PC-3 (cell line): ENCODE measurements at regions of chr3 and their contacts with region 1.

Region 1: DNA sequence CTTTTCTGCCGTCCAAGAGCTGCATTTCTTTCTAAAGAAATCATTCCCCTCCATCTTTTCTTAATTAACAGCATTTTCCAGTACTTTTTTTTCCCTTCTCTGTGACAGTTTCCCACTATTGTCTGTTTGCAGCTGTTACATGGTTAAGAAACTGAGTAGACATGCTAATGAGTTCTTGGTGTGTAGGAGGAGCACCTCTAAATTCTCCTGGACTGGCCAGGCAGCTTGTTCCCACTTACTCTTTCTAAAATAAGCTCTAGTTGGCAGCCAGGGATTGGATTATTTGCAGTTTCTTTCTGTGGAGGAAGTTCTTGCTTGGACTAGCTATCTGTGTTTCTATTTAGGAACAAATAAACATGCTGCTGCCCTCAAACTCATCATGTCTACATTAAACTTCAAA is 235.1 kb upstream of the GAP43 start:
- DNase-seq: no peak
- ATAC-seq: no peak
- H3K4me3 ChIP-seq: no peak overlapping the region
- H3K27ac ChIP-seq: no peak overlapping the region
- H3K4me1 ChIP-seq: no peaks in the 10 kb centered on the region
- H3K27me3 ChIP-seq: 0 out of 2 replicates have a peak, but pooled peaks cover 8% of the 10 kb centered on the region
- CTCF ChIP-seq: no peak

Region 2: GRCh38 chr3:114848082-114848481 is 540.1 kb before region 1 on chr3:
- CTCF ChIA-PET with region 1: no interaction called
- POLR2A ChIA-PET with region 1: interaction called, 11 read pairs
- intact Hi-C with region 1: no loop called
- DNase-seq: no peak
- ATAC-seq: no peak
- H3K4me3 ChIP-seq: no peak overlapping the region
- H3K27ac ChIP-seq: no peak overlapping the region
- H3K4me1 ChIP-seq: no peaks in the 10 kb centered on the region
- H3K27me3 ChIP-seq: no peaks in the 10 kb centered on the region
- CTCF ChIP-seq: no peak

Region 3: GRCh38 chr3:115239717-115240116 is 148.4 kb before region 1 on chr3:
- CTCF ChIA-PET with region 1: no interaction called
- POLR2A ChIA-PET with region 1: no interaction called
- intact Hi-C with region 1: no loop called
- DNase-seq: peak; percentile 95
- ATAC-seq: peak; percentile 100
- H3K4me3 ChIP-seq: no peak overlapping the region
- H3K27ac ChIP-seq: peak overlapping the region; percentile 90
- H3K4me1 ChIP-seq: peaks cover 20% of the 10 kb centered on the region
- H3K27me3 ChIP-seq: no peaks in the 10 kb centered on the region
- CTCF ChIP-seq: no peak

Region 4: DNA sequence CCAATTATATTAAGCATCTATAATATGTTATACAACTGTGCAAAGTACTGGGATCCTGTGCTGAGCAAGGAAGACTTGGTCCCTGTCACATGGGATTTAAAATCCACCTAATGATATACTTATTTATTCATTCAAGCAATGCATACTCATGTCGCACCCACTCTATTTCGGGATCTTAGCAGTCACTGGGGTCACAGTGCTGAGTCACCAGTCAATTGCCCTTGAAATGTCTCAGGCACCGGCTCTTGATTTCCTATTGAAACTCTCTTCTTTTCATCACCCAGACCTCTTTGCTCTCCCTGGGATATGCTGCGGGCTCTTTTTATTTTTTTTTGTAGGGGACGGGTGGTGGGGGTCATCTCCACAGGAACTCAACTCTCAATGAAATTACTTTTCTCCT is 40.7 kb after region 1 on chr3:
- CTCF ChIA-PET with region 1: no interaction called
- POLR2A ChIA-PET with region 1: no interaction called
- intact Hi-C with region 1: no loop called
- DNase-seq: no peak
- ATAC-seq: no peak
- H3K4me3 ChIP-seq: no peak overlapping the region
- H3K27ac ChIP-seq: no peak overlapping the region
- H3K4me1 ChIP-seq: no peaks in the 10 kb centered on the region
- H3K27me3 ChIP-seq: no peaks in the 10 kb centered on the region
- CTCF ChIP-seq: no peak

Region 5: GRCh38 chr3:115804722-115805121 is 416.6 kb after region 1 on chr3:
- CTCF ChIA-PET with region 1: no interaction called
- POLR2A ChIA-PET with region 1: interaction called, 11 read pairs
- intact Hi-C with region 1: no loop called
- DNase-seq: peak; percentile 96
- ATAC-seq: peak; percentile 62
- H3K4me3 ChIP-seq: peak overlapping the region; percentile 31; the same call in 1 of the 2 replicates
- H3K27ac ChIP-seq: peak overlapping the region; percentile 98
- H3K4me1 ChIP-seq: peaks cover 63% of the 10 kb centered on the region
- H3K27me3 ChIP-seq: no peaks in the 10 kb centered on the region
- CTCF ChIP-seq: no peak